Left ventricle myocardium superior (tissue), 1 donor: ENCODE measurements at regions of chr2 and their contacts with region 1.

Region 1: GRCh38 chr2:20661067-20661980 is 5.6 kb upstream of the GDF7 start:
- DNase-seq: no peak
- ATAC-seq: peak; percentile 84

Region 2: GRCh38 chr2:20446917-20447436 is 214.3 kb before region 1 on chr2 and contains the start of gene RHOB:
- intact Hi-C with region 1: no loop called
- DNase-seq: peak; percentile 98
- ATAC-seq: peak; percentile 86
- total RNA-seq, gene RHOB: 182 TPM

Region 3: GRCh38 chr2:20962939-20963557 is 301.7 kb after region 1 on chr2:
- intact Hi-C with region 1: loop called (anchors 2 kb)
- DNase-seq: peak; percentile 71
- ATAC-seq: peak; percentile 54

Region 4: DNA sequence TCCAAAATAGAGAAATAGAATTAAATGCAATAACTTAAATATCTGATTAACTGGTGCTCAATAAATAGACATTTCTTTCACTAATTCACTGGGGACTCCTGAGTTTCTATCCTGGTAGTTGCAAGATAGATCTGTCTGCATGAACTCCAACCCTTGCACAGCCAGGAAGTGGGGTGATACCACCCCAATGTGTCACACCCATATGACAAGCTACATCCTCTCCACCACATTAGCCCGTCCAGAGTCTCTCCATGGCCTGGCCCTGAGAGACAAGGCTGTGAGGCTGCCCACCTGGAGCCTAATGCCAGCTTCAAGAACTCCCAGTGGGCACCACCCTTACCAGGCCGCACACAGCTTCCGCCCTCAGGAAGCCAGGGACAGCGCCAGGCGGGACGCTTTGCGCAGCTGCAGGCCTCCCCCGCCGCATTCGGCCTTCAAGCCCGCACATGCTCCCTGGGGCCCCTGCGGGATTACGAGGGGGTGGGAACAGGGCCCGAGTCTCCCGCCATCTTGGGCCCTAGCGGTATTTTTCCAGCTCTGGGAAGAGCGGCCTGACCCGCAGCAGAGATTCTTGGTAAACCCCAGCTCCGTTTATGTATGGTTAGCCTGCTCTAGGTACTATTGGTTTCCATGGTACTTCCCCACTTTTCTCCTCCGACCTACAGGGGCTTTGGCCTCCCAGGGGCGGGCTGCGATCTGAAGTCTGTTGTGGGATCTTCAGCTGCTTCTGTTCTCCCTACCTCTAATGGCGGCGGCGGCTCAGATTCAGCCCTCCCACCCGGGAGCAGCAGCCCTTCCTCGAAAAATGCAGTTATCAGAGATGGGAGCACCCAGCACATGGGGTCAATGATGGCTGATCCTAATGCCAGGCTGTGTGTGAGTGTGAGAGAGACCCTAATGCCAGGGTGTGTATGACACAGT is 462.4 kb after region 1 on chr2 and contains the start of gene TDRD15:
- intact Hi-C with region 1: loop called (anchors 10 kb)
- DNase-seq: no peak
- ATAC-seq: no peak
- total RNA-seq, gene TDRD15: not detected